Activated CD4-positive, alpha-beta memory T cell treated with anti-CD3 and anti-CD28 coated beads for 36 hours (primary cell): ENCODE measurements at regions of chr13 and their contacts with region 1.

Region 1: GRCh38 chr13:28282451-28282850 is 144.1 kb downstream of the PAN3 start:
- DNase-seq: no peak
- H3K4me3 Mint-ChIP-seq: no peak overlapping the region
- H3K27ac Mint-ChIP-seq: no peak overlapping the region
- H3K4me1 Mint-ChIP-seq: no peaks in the 10 kb centered on the region
- H3K27me3 Mint-ChIP-seq: no peaks in the 10 kb centered on the region

Region 2: GRCh38 chr13:28058866-28059624 is 223.4 kb before region 1 on chr13:
- CTCF ChIA-PET with region 1: no interaction called
- POLR2A ChIA-PET with region 1: no interaction called
- intact Hi-C with region 1: loop called (anchors 10 kb)
- DNase-seq: peak; percentile 60
- H3K4me3 Mint-ChIP-seq: no peak overlapping the region
- H3K27ac Mint-ChIP-seq: no peak overlapping the region
- H3K4me1 Mint-ChIP-seq: no peaks in the 10 kb centered on the region
- H3K27me3 Mint-ChIP-seq: peaks cover 14% of the 10 kb centered on the region